ENCODE measurements at regions of chr7 and their contacts with region 1.

Region 1: GRCh38 chr7:104848138-104848990 is 165.6 kb upstream of the KMT2E start:
- DNase-seq: peak; percentile 36 to 58 (median 41)
- H3K4me3 ChIP-seq: no peak overlapping the region
- H3K27ac ChIP-seq: no peak overlapping the region
- H3K4me1 ChIP-seq: no peaks in the 10 kb centered on the region
- H3K27me3 ChIP-seq: peaks cover 0 to 9% (median 3%) of the 10 kb centered on the region in 5 experiments

Region 2: GRCh38 chr7:104643587-104644217 is 204.7 kb before region 1 on chr7:
- CTCF ChIA-PET with region 1: interaction called, 44 read pairs
- POLR2A ChIA-PET with region 1: no interaction called
- DNase-seq: peak; percentile 20 to 50 (median 42)
- H3K4me3 ChIP-seq: no peak overlapping the region
- H3K27ac ChIP-seq: no peak overlapping the region
- H3K4me1 ChIP-seq: no peaks in the 10 kb centered on the region
- H3K27me3 ChIP-seq: peaks cover 0 to 4% (median 0%) of the 10 kb centered on the region in 5 experiments

Region 3: GRCh38 chr7:104826135-104826534 is 22.2 kb before region 1 on chr7:
- CTCF ChIA-PET with region 1: interaction called, 12 read pairs
- POLR2A ChIA-PET with region 1: no interaction called
- DNase-seq: peak in 2 of 3 donors; percentile 10 to 20
- H3K4me3 ChIP-seq: no peak overlapping the region
- H3K27ac ChIP-seq: no peak overlapping the region
- H3K4me1 ChIP-seq: no peaks in the 10 kb centered on the region
- H3K27me3 ChIP-seq: peaks cover 0 to 6% (median 0%) of the 10 kb centered on the region in 5 experiments

Region 4: DNA sequence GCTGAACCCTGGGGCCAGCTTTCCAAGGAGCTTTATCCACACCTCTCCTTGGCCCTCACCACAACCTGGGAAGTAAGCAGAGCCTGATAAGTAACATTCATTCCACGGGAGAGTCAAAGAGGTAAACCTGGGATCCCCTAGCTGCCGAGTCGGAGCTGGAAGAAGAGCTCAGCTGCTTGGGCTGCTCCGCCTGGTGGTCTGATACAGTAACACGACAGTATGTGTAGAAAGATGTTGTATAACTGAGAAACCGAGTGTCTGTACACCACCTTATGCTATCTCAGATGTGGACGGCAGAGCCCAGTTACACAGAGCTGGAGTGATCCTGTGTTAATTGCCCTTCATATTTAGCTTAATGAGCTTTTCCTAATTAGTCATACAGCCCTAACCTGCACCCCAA is 14.4 kb after region 1 on chr7:
- CTCF ChIA-PET with region 1: interaction called, 19 read pairs
- POLR2A ChIA-PET with region 1: interaction called, 3 read pairs
- DNase-seq: peak in 1 of 3 donors; percentile 11
- H3K4me3 ChIP-seq: no peak overlapping the region
- H3K27ac ChIP-seq: no peak overlapping the region
- H3K4me1 ChIP-seq: peaks cover 12 to 27% (median 22%) of the 10 kb centered on the region in 4 experiments
- H3K27me3 ChIP-seq: no peaks in the 10 kb centered on the region

Region 5: GRCh38 chr7:104980841-104981671 is 132.7 kb after region 1 on chr7:
- CTCF ChIA-PET with region 1: no interaction called
- POLR2A ChIA-PET with region 1: no interaction called
- DNase-seq: peak; percentile 60 to 76 (median 71)
- H3K4me3 ChIP-seq: no peak overlapping the region
- H3K27ac ChIP-seq: no peak overlapping the region
- H3K4me1 ChIP-seq: peaks cover 13 to 57% (median 21%) of the 10 kb centered on the region in 4 experiments
- H3K27me3 ChIP-seq: no peaks in the 10 kb centered on the region